K562 (cell line): ENCODE measurements at regions of chr4 and their contacts with region 1.

Region 1: GRCh38 chr4:24686871-24687680 is 102.7 kb upstream of the DHX15 start:
- DNase-seq: peak; percentile 56 to 65 (median 60)
- ATAC-seq: peak; percentile 93
- H3K4me3 ChIP-seq: no peak overlapping the region
- H3K27ac ChIP-seq: no peak overlapping the region
- H3K4me1 ChIP-seq: no peaks in the 10 kb centered on the region
- H3K27me3 ChIP-seq: peaks cover 0 to 5% of the 10 kb centered on the region in 2 experiments; a peak in 1 of 5 replicates
- CTCF ChIP-seq: peak; percentile 73 to 83 (median 81)
- EP300 ChIP-seq: no peak
- POLR2A ChIP-seq: no peak
- RAD21 ChIP-seq: peak; percentile 38 to 68

Region 2: GRCh38 chr4:24488399-24489164 is 198.5 kb before region 1 on chr4:
- CTCF ChIA-PET with region 1: interaction called, 9 read pairs
- POLR2A ChIA-PET with region 1: no interaction called
- in situ Hi-C with region 1: loop called (anchors 10 kb)
- intact Hi-C with region 1: loop called (anchors 1 kb)
- DNase-seq: peak; percentile 75 to 86 (median 84)
- ATAC-seq: peak; percentile 99
- H3K4me3 ChIP-seq: no peak overlapping the region
- H3K27ac ChIP-seq: no peak overlapping the region
- H3K4me1 ChIP-seq: no peaks in the 10 kb centered on the region
- H3K27me3 ChIP-seq: peaks cover 0 to 19% of the 10 kb centered on the region in 2 experiments; a peak in 3 of 5 replicates
- CTCF ChIP-seq: peak; percentile 75 to 89 (median 80)
- EP300 ChIP-seq: no peak
- POLR2A ChIP-seq: no peak
- RAD21 ChIP-seq: peak; percentile 63 to 80